ENCODE measurements at regions of chr5 and their contacts with region 1.

Region 1: GRCh38 chr5:170896779-170897178 is 35.0 kb downstream of the RANBP17 start:
- DNase-seq: peak; percentile 49 to 88
- H3K4me3 ChIP-seq: no peak overlapping the region
- H3K27ac ChIP-seq: no peak overlapping the region
- H3K4me1 ChIP-seq: no peaks in the 10 kb centered on the region; a peak in 1 of 7 replicates
- H3K27me3 ChIP-seq: no peaks in the 10 kb centered on the region
- CTCF ChIP-seq: peak; percentile 83 to 89 (median 86)
- EP300 ChIP-seq: no peak
- POLR2A ChIP-seq: no peak
- RAD21 ChIP-seq: peak; percentile 82 to 83

Region 2: GRCh38 chr5:170874017-170874416 is 22.8 kb before region 1 on chr5:
- CTCF ChIA-PET with region 1: interaction called, 10 read pairs
- POLR2A ChIA-PET with region 1: no interaction called
- DNase-seq: no peak
- H3K4me3 ChIP-seq: no peak overlapping the region
- H3K27ac ChIP-seq: no peak overlapping the region
- H3K4me1 ChIP-seq: peaks cover 0 to 2% (median 0%) of the 10 kb centered on the region in 4 experiments; a peak in 1 of 7 replicates
- H3K27me3 ChIP-seq: no peaks in the 10 kb centered on the region
- CTCF ChIP-seq: no peak
- EP300 ChIP-seq: no peak
- POLR2A ChIP-seq: no peak
- RAD21 ChIP-seq: no peak

Measured in H1 (cell line).